ENCODE measurements at regions of chr5 and their contacts with region 1.

Region 1: DNA sequence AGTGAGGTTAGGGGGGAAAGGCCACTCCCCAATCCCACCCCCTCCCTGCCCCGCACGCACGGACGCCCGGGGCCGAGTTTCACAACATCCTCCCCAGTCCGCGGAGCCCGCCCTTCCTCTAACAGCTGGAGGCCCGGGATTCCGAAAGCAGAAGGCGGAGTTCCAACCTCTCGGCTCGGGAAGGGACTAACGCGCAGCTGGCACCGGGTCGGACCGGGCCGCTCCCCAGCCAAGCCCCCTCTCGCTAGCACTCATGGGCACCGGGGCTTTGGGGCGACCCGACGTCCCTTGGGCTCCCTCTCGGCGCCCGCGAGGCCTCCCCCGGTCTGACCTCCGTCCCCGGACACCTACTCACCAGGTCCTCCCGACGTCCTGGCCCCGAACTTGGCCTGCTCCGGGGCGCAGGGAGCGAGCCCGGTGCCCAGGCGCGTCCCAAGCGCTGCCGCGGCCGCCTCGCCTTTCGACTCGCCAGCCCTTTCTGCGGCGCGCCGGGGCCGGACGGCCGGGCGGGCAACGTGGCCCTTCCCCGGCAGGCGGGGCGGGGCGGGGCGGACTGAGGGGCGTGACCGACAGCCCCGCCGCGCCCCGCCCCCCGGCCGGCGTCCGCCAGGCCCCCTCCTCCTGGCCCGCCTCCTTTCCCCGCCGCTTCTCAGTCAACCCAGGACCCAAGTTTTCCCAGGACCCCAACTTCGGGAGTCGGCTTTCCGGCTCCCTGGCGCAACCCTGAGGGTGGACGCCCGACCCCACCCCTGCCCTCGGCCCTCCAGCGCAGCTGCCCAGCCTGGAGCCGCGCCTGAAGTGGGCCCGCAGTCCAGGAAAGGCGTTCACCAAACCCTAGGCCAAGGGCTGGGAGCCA is at the start of gene MGAT1:
- DNase-seq: peak; percentile 82
- ATAC-seq: peak; percentile 65
- H3K4me3 ChIP-seq: peak within 1 kb of the TSS; percentile 82 to 96 (median 90)
- H3K4me3 Mint-ChIP-seq: peak within 1 kb of the TSS; percentile 96
- H3K27ac ChIP-seq: peak within 1 kb of the TSS; percentile 81 to 90
- H3K27ac Mint-ChIP-seq: peak within 1 kb of the TSS; percentile 87
- H3K4me1 ChIP-seq: peaks cover 80 to 83% of the 10 kb centered on the region in 2 donors
- H3K4me1 Mint-ChIP-seq: peaks cover 84% of the 10 kb centered on the region
- H3K27me3 ChIP-seq: no peaks in the 10 kb centered on the region
- H3K27me3 Mint-ChIP-seq: no peaks in the 10 kb centered on the region
- CTCF ChIP-seq: no peak
- total RNA-seq, gene MGAT1: 140 and 144 TPM in 2 replicates

Region 2: GRCh38 chr5:180636403-180637075 is 166.0 kb before region 1 on chr5:
- CTCF ChIA-PET with region 1: no interaction called
- POLR2A ChIA-PET with region 1: no interaction called
- intact Hi-C with region 1: no loop called
- DNase-seq: no peak
- ATAC-seq: no peak
- H3K4me3 ChIP-seq: no peak overlapping the region
- H3K4me3 Mint-ChIP-seq: no peak overlapping the region
- H3K27ac ChIP-seq: no peak overlapping the region
- H3K27ac Mint-ChIP-seq: no peak overlapping the region
- H3K4me1 ChIP-seq: no peaks in the 10 kb centered on the region
- H3K4me1 Mint-ChIP-seq: peaks cover 3% of the 10 kb centered on the region
- H3K27me3 ChIP-seq: no peaks in the 10 kb centered on the region
- H3K27me3 Mint-ChIP-seq: no peaks in the 10 kb centered on the region
- CTCF ChIP-seq: no peak

Region 3: GRCh38 chr5:181243512-181244343 is 441.2 kb after region 1 on chr5 and contains the start of gene RACK1:
- CTCF ChIA-PET with region 1: no interaction called
- POLR2A ChIA-PET with region 1: no interaction called
- intact Hi-C with region 1: loop called (anchors 5 kb)
- DNase-seq: peak; percentile 96
- ATAC-seq: peak; percentile 75
- H3K4me3 ChIP-seq: peak within 1 kb of the TSS; percentile 70 to 99 (median 98)
- H3K4me3 Mint-ChIP-seq: peak within 1 kb of the TSS; percentile 99
- H3K27ac ChIP-seq: peak within 1 kb of the TSS; percentile 91 to 92
- H3K27ac Mint-ChIP-seq: peak within 1 kb of the TSS; percentile 96
- H3K4me1 ChIP-seq: peaks cover 44 to 58% of the 10 kb centered on the region in 2 donors
- H3K4me1 Mint-ChIP-seq: peaks cover 66% of the 10 kb centered on the region
- H3K27me3 ChIP-seq: no peaks in the 10 kb centered on the region
- H3K27me3 Mint-ChIP-seq: no peaks in the 10 kb centered on the region
- CTCF ChIP-seq: no peak
- total RNA-seq, gene RACK1: 1,928 and 2,047 TPM in 2 replicates

Measured in B cell (primary cell).